CD4-positive, alpha-beta T cell (primary cell): ENCODE measurements at regions of chr12 and their contacts with region 1.

Region 1: GRCh38 chr12:121811434-121812319 is 7.9 kb downstream of the SETD1B start:
- DNase-seq: peak in 13 of 14 experiments; percentile 33 to 85 (median 66)
- ATAC-seq: peak; percentile 69
- H3K4me3 ChIP-seq: peak overlapping the region; percentile 64
- H3K4me3 Mint-ChIP-seq: peak overlapping the region; percentile 79
- H3K27ac ChIP-seq: peak overlapping the region; percentile 1 to 44
- H3K27ac Mint-ChIP-seq: peak overlapping the region; percentile 75
- H3K4me1 ChIP-seq: peaks cover 74% of the 10 kb centered on the region
- H3K4me1 Mint-ChIP-seq: peaks cover 58% of the 10 kb centered on the region
- H3K27me3 ChIP-seq: no peaks in the 10 kb centered on the region
- H3K27me3 Mint-ChIP-seq: no peaks in the 10 kb centered on the region
- CTCF ChIP-seq: peak; percentile 97

Region 2: GRCh38 chr12:121697098-121697698 is 114.5 kb before region 1 on chr12:
- CTCF ChIA-PET with region 1: interaction called, 4 read pairs
- POLR2A ChIA-PET with region 1: no interaction called
- intact Hi-C with region 1: loop called in 1 of 2 experiments (anchors 2 kb)
- DNase-seq: peak in 4 of 14 experiments; percentile 55 to 79 (median 78)
- ATAC-seq: peak; percentile 32
- H3K4me3 ChIP-seq: no peak overlapping the region
- H3K4me3 Mint-ChIP-seq: no peak overlapping the region
- H3K27ac ChIP-seq: no peak overlapping the region
- H3K27ac Mint-ChIP-seq: no peak overlapping the region
- H3K4me1 ChIP-seq: peaks cover 2% of the 10 kb centered on the region
- H3K4me1 Mint-ChIP-seq: peaks cover 4% of the 10 kb centered on the region
- H3K27me3 ChIP-seq: no peaks in the 10 kb centered on the region
- H3K27me3 Mint-ChIP-seq: no peaks in the 10 kb centered on the region
- CTCF ChIP-seq: peak; percentile 81

Region 3: GRCh38 chr12:121712461-121713256 is 99.0 kb before region 1 on chr12 and contains the start of gene TMEM120B:
- CTCF ChIA-PET with region 1: interaction called, 14 read pairs
- POLR2A ChIA-PET with region 1: interaction called, 7 read pairs
- intact Hi-C with region 1: no loop called
- DNase-seq: peak; percentile 71 to 93 (median 82)
- ATAC-seq: peak; percentile 87
- H3K4me3 ChIP-seq: peak within 1 kb of the TSS; percentile 99
- H3K4me3 Mint-ChIP-seq: peak within 1 kb of the TSS; percentile 90
- H3K27ac ChIP-seq: peak within 1 kb of the TSS; percentile 40 to 54
- H3K27ac Mint-ChIP-seq: peak within 1 kb of the TSS; percentile 83
- H3K4me1 ChIP-seq: peaks cover 27% of the 10 kb centered on the region
- H3K4me1 Mint-ChIP-seq: peaks cover 19% of the 10 kb centered on the region
- H3K27me3 ChIP-seq: no peaks in the 10 kb centered on the region
- H3K27me3 Mint-ChIP-seq: no peaks in the 10 kb centered on the region
- CTCF ChIP-seq: peak; percentile 26
- total RNA-seq, gene TMEM120B: 7.3 to 7.7 TPM

Region 4: DNA sequence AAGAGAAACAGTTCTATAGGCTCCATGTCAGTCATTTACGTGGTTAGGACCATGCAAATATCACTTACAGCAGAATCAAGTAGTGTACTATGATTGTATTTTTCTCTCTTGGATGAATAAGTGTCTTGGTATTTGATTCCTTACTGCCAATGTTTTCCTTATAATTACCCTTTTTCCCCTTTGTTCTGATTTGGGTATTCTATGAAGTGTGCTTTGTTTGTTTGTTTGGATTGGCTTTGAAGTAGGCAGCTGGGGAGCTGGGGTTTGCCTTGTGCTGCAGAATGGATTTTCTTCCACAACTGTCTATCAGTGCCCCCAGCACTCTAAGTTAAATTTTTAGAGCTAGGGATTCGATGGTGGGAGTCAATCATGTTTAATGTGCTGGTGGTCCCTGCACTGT is 86.7 kb before region 1 on chr12:
- CTCF ChIA-PET with region 1: no interaction called
- POLR2A ChIA-PET with region 1: no interaction called
- intact Hi-C with region 1: no loop called
- DNase-seq: no peak
- ATAC-seq: no peak
- H3K4me3 ChIP-seq: no peak overlapping the region
- H3K4me3 Mint-ChIP-seq: no peak overlapping the region
- H3K27ac ChIP-seq: no peak overlapping the region
- H3K27ac Mint-ChIP-seq: no peak overlapping the region
- H3K4me1 ChIP-seq: no peaks in the 10 kb centered on the region
- H3K4me1 Mint-ChIP-seq: no peaks in the 10 kb centered on the region
- H3K27me3 ChIP-seq: no peaks in the 10 kb centered on the region
- H3K27me3 Mint-ChIP-seq: no peaks in the 10 kb centered on the region
- CTCF ChIP-seq: no peak

Region 5: DNA sequence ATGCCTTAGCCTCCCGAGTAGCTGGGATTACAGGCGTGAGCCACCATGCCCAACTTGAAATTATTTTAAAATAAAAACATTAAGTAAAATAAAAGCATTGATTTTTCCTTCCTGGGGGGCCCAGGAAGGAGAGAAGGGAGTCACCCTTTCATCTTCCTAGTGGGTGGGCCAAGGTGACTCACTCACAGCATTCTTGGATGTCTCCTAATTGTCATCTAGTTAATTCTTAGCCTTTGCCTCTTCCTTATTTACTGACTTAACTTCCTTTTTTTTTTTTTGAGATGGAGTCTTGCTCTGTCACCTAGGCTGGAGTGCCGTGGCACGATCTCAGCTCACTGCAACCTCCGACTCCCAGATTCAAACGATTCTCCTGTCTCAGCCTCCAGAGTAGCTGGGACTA is 69.9 kb before region 1 on chr12:
- CTCF ChIA-PET with region 1: no interaction called
- POLR2A ChIA-PET with region 1: no interaction called
- intact Hi-C with region 1: no loop called
- DNase-seq: no peak
- ATAC-seq: no peak
- H3K4me3 ChIP-seq: no peak overlapping the region
- H3K4me3 Mint-ChIP-seq: no peak overlapping the region
- H3K27ac ChIP-seq: no peak overlapping the region
- H3K27ac Mint-ChIP-seq: no peak overlapping the region
- H3K4me1 ChIP-seq: no peaks in the 10 kb centered on the region
- H3K4me1 Mint-ChIP-seq: no peaks in the 10 kb centered on the region
- H3K27me3 ChIP-seq: no peaks in the 10 kb centered on the region
- H3K27me3 Mint-ChIP-seq: no peaks in the 10 kb centered on the region
- CTCF ChIP-seq: no peak

Region 6: DNA sequence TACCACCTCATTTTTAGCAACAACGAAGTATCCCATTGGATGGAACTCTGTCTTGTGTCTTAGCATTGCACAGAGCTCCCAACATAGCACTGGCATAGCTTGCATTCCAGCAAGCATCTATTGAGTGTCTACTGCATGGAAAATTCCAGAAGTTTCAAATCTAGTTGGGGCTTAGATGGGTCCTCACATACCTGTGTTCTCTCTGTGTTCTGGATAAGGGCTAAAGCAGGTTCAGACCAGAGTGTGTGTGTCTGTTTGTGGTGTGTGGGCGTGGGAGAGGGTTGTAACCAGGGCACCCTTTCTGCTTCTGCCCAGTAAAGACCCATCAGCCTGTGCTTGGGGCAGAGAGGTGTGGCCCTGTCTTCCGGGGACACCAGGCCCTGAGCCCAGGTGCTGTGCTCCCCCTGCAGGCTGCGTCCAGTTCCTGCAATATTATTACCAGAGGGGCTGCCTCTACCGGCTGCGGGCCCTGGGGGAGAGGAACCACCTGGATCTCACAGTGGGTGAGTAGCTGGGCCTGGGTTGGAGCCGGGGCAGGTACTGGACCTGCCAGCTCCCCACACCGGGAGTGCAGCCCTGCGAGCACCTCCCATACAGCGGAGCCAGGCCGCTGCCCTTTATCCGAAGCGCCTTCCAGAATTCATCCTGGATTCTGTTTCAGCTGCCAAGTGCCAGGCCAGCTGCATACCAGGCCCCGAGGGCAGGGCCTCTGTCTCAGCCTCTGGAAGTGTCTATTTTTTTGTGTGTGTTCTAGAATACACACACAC is 38.5 kb before region 1 on chr12:
- CTCF ChIA-PET with region 1: interaction called, 12 read pairs
- POLR2A ChIA-PET with region 1: interaction called, 1,869 read pairs
- intact Hi-C with region 1: loop called in 1 of 2 experiments (anchors 1 kb)
- DNase-seq: peak; percentile 67 to 89 (median 76)
- ATAC-seq: peak; percentile 84
- H3K4me3 ChIP-seq: no peak overlapping the region
- H3K4me3 Mint-ChIP-seq: no peak overlapping the region
- H3K27ac ChIP-seq: no peak overlapping the region
- H3K27ac Mint-ChIP-seq: no peak overlapping the region
- H3K4me1 ChIP-seq: peaks cover 26% of the 10 kb centered on the region
- H3K4me1 Mint-ChIP-seq: peaks cover 13% of the 10 kb centered on the region
- H3K27me3 ChIP-seq: no peaks in the 10 kb centered on the region
- H3K27me3 Mint-ChIP-seq: no peaks in the 10 kb centered on the region
- CTCF ChIP-seq: peak; percentile 91

Region 7: DNA sequence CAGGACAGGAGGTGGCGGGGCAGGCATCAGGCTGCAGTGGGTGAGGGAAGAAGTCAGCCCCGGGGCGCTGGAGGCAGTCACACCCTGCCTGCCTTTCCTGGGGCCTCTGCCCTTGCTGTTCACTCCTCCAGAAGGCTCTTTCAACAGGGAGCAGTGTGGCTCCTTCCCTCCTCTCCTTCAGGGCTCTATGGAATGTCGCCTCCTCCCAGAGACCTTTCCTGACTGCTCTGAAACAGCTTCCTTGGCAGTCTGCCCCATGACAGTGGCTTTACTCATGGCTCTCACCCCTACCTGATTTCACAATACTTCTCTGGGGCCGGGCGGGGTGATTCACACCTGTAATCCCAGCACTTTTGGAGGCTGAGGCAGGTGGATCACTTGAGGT is 25.2 kb before region 1 on chr12:
- CTCF ChIA-PET with region 1: interaction called, 746 read pairs
- POLR2A ChIA-PET with region 1: interaction called, 1,869 read pairs
- intact Hi-C with region 1: no loop called
- DNase-seq: peak in 7 of 14 experiments; percentile 43 to 79 (median 57)
- ATAC-seq: peak; percentile 8
- H3K4me3 ChIP-seq: peak overlapping the region; percentile 36
- H3K4me3 Mint-ChIP-seq: peak overlapping the region; percentile 90
- H3K27ac ChIP-seq: peak overlapping the region; percentile 94 to 99
- H3K27ac Mint-ChIP-seq: peak overlapping the region; percentile 97
- H3K4me1 ChIP-seq: peaks cover 100% of the 10 kb centered on the region
- H3K4me1 Mint-ChIP-seq: peaks cover 93% of the 10 kb centered on the region
- H3K27me3 ChIP-seq: no peaks in the 10 kb centered on the region
- H3K27me3 Mint-ChIP-seq: no peaks in the 10 kb centered on the region
- CTCF ChIP-seq: no peak

Region 8: DNA sequence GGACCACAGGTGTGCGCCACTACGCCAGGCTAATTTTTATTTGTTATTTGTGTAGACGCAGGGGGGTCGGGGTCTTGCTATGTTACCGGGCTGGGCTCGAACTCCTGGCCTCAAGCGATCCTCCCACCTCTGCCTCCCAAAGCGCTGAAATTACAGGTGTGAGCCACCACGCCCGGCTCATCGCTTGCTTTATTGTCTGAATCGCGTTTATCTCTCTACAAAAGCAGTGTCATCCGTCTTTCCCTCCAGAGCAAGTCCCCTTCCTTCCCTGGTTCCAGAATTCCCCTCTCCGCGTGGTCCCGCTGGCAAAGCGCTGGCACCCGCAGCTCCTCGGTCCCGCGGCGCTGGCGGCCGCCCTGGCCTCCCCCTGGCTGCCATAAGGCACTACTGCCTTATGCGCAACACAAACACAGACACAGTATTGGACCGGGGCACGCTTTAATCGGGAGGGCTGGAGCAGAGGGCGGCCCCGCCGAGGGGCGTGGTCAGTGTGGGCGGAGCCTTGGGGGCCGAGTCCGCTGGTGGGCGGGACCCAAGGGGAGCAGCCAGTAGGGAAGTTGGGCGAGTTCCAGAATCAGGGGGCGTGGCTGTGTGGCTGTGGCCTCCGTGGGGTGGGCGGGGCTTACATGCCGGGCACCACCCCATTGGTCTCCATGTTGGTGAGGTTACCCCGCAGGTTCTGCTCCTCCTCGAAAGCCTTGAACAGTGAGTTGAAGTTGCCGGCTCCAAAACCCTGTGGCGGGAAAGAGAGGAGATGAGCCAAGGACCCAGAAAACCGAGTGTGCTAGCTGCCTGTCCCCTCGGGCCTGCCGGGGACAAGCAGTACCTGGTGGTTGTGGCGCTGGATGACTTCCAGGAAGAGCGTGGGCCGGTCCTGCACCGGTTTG is 27.7 kb after region 1 on chr12:
- CTCF ChIA-PET with region 1: interaction called, 18 read pairs
- POLR2A ChIA-PET with region 1: interaction called, 4 read pairs
- intact Hi-C with region 1: no loop called
- DNase-seq: peak; percentile 99 to 100 (median 100)
- ATAC-seq: peak; percentile 97
- H3K4me3 ChIP-seq: peak overlapping the region; percentile 85
- H3K4me3 Mint-ChIP-seq: peak overlapping the region; percentile 94
- H3K27ac ChIP-seq: peak overlapping the region; percentile 21 to 44
- H3K27ac Mint-ChIP-seq: peak overlapping the region; percentile 77
- H3K4me1 ChIP-seq: peaks cover 18% of the 10 kb centered on the region
- H3K4me1 Mint-ChIP-seq: peaks cover 14% of the 10 kb centered on the region
- H3K27me3 ChIP-seq: no peaks in the 10 kb centered on the region
- H3K27me3 Mint-ChIP-seq: no peaks in the 10 kb centered on the region
- CTCF ChIP-seq: peak; percentile 54